ENCODE measurements at regions of chr15 and their contacts with region 1.

Region 1: GRCh38 chr15:38563723-38564519 is 693 bp downstream of the RASGRP1 start:
- DNase-seq: peak; percentile 65 to 92 (median 82)
- ATAC-seq: peak; percentile 75 to 77 (median 76)
- H3K4me3 ChIP-seq: peak overlapping the region; percentile 90
- H3K4me3 Mint-ChIP-seq: peak overlapping the region; percentile 87 to 96 (median 88)
- H3K27ac ChIP-seq: peak overlapping the region; percentile 83
- H3K27ac Mint-ChIP-seq: peak overlapping the region; percentile 94 to 98
- H3K4me1 ChIP-seq: peaks cover 40 to 51% of the 10 kb centered on the region in 2 experiments
- H3K4me1 Mint-ChIP-seq: peaks cover 58 to 65% (median 64%) of the 10 kb centered on the region in 3 donors
- H3K27me3 ChIP-seq: no peaks in the 10 kb centered on the region
- H3K27me3 Mint-ChIP-seq: no peaks in the 10 kb centered on the region

Region 2: DNA sequence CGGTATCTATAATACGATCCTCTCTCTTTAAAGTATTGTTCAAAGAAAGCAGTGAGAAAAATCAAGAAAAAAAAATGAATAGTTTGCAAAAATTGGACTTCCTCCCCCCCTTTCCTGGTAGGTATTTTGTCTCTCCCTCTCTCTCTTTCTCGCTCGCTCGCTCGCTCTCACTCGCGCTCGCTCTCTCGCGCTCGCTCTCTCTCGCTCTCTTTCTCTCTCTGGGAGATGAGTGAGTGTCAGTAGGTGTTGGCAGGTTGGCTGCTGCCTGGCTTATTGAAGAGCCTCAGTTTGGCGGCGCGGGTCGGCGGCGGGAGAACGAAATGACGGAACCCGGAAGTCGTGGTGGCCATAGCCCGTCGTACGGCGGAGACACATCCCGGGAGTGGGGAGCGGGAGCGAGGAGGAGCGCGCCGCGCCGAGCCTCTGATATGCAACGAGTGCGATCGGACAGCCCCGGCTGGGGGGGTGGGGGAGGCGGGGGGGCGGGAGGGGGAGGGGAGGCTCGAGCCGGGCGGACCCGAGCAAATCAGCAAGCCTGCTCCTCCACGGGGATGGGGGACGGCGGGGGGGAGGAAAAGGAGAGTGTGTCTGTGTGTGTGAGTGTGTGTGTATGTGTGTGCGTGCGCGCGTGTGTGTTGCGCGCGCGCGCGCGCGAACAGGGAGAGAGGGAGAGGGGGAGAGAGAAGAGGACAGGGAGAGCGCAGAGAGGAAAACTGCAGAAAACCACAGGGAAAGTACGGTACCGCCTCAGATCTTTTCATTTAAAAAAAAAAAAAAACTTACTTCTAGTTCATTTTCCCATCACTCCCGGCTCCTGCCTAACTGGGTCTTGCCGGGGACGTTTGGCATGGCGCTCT is 1463.6 kb before region 1 on chr15 and contains the start of gene MEIS2:
- CTCF ChIA-PET with region 1: no interaction called
- POLR2A ChIA-PET with region 1: no interaction called
- DNase-seq: peak in 8 of 35 experiments; percentile 12 to 37 (median 19)
- ATAC-seq: peak in 3 of 4 experiments; percentile 29 to 45 (median 40)
- H3K4me3 ChIP-seq: peak within 1 kb of the TSS; percentile 59 to 83
- H3K4me3 Mint-ChIP-seq: peak within 1 kb of the TSS; percentile 87 to 88 (median 87)
- H3K27ac ChIP-seq: no peak within 1 kb of the TSS
- H3K27ac Mint-ChIP-seq: peak within 1 kb of the TSS; percentile 3 to 31
- H3K4me1 ChIP-seq: peaks cover 17 to 52% of the 10 kb centered on the region in 2 experiments
- H3K4me1 Mint-ChIP-seq: peaks cover 42 to 58% (median 56%) of the 10 kb centered on the region in 3 donors
- H3K27me3 ChIP-seq: peaks cover 26 to 84% of the 10 kb centered on the region in 2 experiments
- H3K27me3 Mint-ChIP-seq: peaks cover 62 to 85% of the 10 kb centered on the region in 2 donors
- total RNA-seq, gene MEIS2: 0.38 to 0.54 TPM in 2 of 5 donors, not detected in the others

Region 3: DNA sequence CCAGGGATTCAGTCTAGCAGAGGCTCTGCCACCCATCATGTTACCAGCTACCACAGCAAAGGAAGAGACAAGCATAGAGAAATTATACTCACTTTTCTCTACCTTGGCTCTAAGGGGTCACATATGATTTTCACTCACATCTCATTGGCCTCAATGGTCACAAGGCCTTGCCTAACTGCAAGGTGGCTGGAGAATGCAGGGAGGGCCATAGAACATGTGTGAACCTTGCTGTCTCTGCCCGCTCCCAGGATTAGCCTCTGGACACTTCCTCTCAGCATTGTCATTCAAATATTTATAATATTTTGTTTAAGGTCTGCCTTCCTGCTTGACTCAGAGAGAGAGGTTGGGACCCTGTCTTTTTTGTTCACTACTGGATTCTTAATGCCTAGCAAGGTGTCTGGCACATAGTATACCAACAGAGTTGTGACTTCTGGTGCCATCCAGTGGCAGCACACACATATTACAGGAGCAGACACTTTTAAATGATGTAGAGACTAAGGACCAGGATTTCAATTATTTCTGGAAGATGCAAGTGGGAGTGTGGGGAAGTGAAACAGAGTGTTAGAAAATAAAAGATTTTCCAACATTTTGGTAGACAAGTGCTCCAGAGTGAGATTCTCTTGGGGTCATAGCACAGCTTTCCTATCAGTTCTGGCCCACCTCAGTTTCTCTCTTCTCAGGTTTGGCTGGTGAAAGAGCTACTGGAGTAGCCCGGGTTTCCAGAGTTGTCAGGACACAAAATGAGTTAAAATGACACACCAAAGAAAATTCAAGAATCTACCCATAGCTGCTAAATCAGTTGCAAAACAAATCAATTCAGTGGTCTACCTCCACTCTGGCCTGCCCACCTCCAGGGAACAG is 119.7 kb after region 1 on chr15:
- CTCF ChIA-PET with region 1: interaction called, 96 to 249 read pairs
- POLR2A ChIA-PET with region 1: interaction called, 5 to 6 read pairs
- DNase-seq: peak in 34 of 35 experiments; percentile 46 to 88 (median 67)
- ATAC-seq: peak; percentile 47 to 60 (median 50)
- H3K4me3 ChIP-seq: no peak overlapping the region
- H3K4me3 Mint-ChIP-seq: peak overlapping the region in 2 of 3 donors; percentile 57 to 68
- H3K27ac ChIP-seq: peak overlapping the region; percentile 67
- H3K27ac Mint-ChIP-seq: peak overlapping the region; percentile 91 to 98
- H3K4me1 ChIP-seq: peaks cover 59 to 60% of the 10 kb centered on the region in 2 experiments
- H3K4me1 Mint-ChIP-seq: peaks cover 69 to 86% (median 85%) of the 10 kb centered on the region in 3 donors
- H3K27me3 ChIP-seq: no peaks in the 10 kb centered on the region
- H3K27me3 Mint-ChIP-seq: no peaks in the 10 kb centered on the region

Region 4: GRCh38 chr15:39132954-39133600 is 569.2 kb after region 1 on chr15:
- CTCF ChIA-PET with region 1: no interaction called
- POLR2A ChIA-PET with region 1: no interaction called
- DNase-seq: no peak
- ATAC-seq: no peak
- H3K4me3 ChIP-seq: no peak overlapping the region
- H3K4me3 Mint-ChIP-seq: no peak overlapping the region
- H3K27ac ChIP-seq: no peak overlapping the region
- H3K27ac Mint-ChIP-seq: no peak overlapping the region
- H3K4me1 ChIP-seq: no peaks in the 10 kb centered on the region
- H3K4me1 Mint-ChIP-seq: no peaks in the 10 kb centered on the region
- H3K27me3 ChIP-seq: no peaks in the 10 kb centered on the region
- H3K27me3 Mint-ChIP-seq: peaks cover 0 to 1% of the 10 kb centered on the region in 2 donors

Measured in T-cell (primary cell).